ENCODE measurements at regions of chr11 and their contacts with region 1.

Region 1: GRCh38 chr11:123246749-123247495 is 51.9 kb upstream of the CLMP start:
- DNase-seq: peak; percentile 87 to 93
- ATAC-seq: peak; percentile 91
- H3K4me3 ChIP-seq: no peak overlapping the region
- H3K27ac ChIP-seq: no peak overlapping the region
- H3K4me1 ChIP-seq: no peaks in the 10 kb centered on the region
- H3K27me3 ChIP-seq: no peaks in the 10 kb centered on the region

Region 2: GRCh38 chr11:122784325-122784955 is 462.5 kb before region 1 on chr11:
- intact Hi-C with region 1: no loop called
- DNase-seq: no peak
- ATAC-seq: peak; percentile 72
- H3K4me3 ChIP-seq: no peak overlapping the region
- H3K27ac ChIP-seq: no peak overlapping the region
- H3K4me1 ChIP-seq: no peaks in the 10 kb centered on the region
- H3K27me3 ChIP-seq: no peaks in the 10 kb centered on the region

Region 3: GRCh38 chr11:123103326-123103980 is 143.5 kb before region 1 on chr11:
- intact Hi-C with region 1: loop called (anchors 2 to 5 kb)
- DNase-seq: peak in 1 of 2 donors; percentile 69
- ATAC-seq: peak; percentile 84
- H3K4me3 ChIP-seq: no peak overlapping the region
- H3K27ac ChIP-seq: peak overlapping the region; percentile 22 to 82
- H3K4me1 ChIP-seq: no peaks in the 10 kb centered on the region
- H3K27me3 ChIP-seq: no peaks in the 10 kb centered on the region

Region 4: DNA sequence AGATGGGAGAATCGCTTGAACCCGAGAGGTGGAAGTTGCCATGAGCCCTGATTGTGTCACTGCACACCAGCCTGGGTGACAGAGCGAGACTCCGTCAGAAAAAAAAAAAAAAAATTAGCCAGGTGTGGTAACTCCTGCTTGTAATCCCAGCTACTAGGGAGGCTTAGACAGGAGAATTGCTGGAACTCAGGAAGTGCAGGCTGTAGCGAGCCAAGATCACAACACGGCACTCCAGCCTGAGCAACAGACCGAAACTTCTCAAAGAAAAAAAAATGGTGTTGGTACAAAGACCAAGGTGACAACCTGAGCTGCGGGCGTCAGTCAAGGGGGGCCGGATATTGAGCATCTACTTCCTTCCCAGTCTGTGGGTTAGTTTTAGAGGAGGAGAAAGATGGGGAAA is 136.6 kb before region 1 on chr11:
- intact Hi-C with region 1: loop called (anchors 1 to 5 kb)
- DNase-seq: no peak
- ATAC-seq: no peak
- H3K4me3 ChIP-seq: no peak overlapping the region
- H3K27ac ChIP-seq: no peak overlapping the region
- H3K4me1 ChIP-seq: no peaks in the 10 kb centered on the region
- H3K27me3 ChIP-seq: no peaks in the 10 kb centered on the region

Measured in aorta (tissue), 5 donors.